SK-N-SH (cell line): ENCODE measurements at regions of chr11 and their contacts with region 1.

Region 1: DNA sequence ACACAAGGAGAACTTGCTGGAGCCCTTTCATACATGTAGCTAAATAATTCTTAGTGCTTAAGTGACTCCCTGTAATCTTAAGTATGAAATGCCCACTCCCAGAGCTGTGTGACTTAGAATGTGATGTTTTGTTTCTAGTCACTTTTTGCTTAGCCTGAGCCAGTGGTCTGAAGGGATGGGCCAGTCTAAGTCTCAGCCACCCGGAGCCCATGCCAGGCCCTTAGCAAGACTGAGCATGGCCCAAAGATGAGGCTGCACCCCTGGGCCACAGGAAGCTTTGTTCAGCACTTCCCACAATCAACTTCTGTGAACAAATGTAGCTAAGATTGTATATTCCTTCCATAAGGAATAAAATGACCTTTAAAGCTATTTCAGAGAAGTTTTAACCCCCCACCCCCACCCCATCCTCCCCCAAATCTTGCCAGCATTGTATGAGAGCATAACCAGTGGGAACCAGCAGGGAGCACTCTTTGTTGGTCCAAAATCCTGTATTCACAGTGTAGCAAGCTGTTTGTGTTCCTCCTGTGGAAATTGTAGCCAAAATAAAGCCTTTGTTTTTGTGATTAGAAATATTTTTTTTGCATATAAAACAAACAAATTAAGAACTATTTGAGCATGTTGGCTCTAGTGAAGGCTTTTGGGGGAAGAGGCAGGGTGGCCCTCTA is 73.8 kb upstream of the GAL start:
- DNase-seq: peak; percentile 67
- H3K4me3 ChIP-seq: no peak overlapping the region
- H3K27ac ChIP-seq: peak overlapping the region in 1 of 2 experiments; percentile 11; a peak in 1 of 4 replicates
- H3K4me1 ChIP-seq: no peaks in the 10 kb centered on the region; a peak in 2 of 4 replicates
- H3K27me3 ChIP-seq: no peaks in the 10 kb centered on the region
- CTCF ChIP-seq: peak; percentile 53
- EP300 ChIP-seq: no peak
- RAD21 ChIP-seq: peak; percentile 74

Region 2: GRCh38 chr11:68798221-68798813 is 187.7 kb after region 1 on chr11:
- CTCF ChIA-PET with region 1: interaction called, 23 read pairs
- POLR2A ChIA-PET with region 1: no interaction called
- DNase-seq: peak; percentile 72
- H3K4me3 ChIP-seq: peak overlapping the region in 1 of 2 experiments; percentile 37; a peak in 1 of 4 replicates
- H3K27ac ChIP-seq: no peak overlapping the region; a peak in 1 of 4 replicates
- H3K4me1 ChIP-seq: no peaks in the 10 kb centered on the region
- H3K27me3 ChIP-seq: no peaks in the 10 kb centered on the region
- CTCF ChIP-seq: peak; percentile 71
- EP300 ChIP-seq: no peak
- RAD21 ChIP-seq: peak; percentile 46